ENCODE measurements at regions of chr11 and their contacts with region 1.

Region 1: GRCh38 chr11:130049328-130049771 is 20.3 kb upstream of the APLP2 start:
- DNase-seq: no peak
- ATAC-seq: peak in 1 of 4 donors; percentile 57
- H3K4me3 ChIP-seq: no peak overlapping the region
- H3K27ac ChIP-seq: no peak overlapping the region
- H3K4me1 ChIP-seq: no peaks in the 10 kb centered on the region
- H3K27me3 ChIP-seq: no peaks in the 10 kb centered on the region
- CTCF ChIP-seq: no peak

Region 2: GRCh38 chr11:130006929-130007328 is 42.4 kb before region 1 on chr11:
- intact Hi-C with region 1: loop called in 1 of 3 experiments (anchors 5 kb)
- DNase-seq: no peak
- ATAC-seq: no peak
- H3K4me3 ChIP-seq: no peak overlapping the region
- H3K27ac ChIP-seq: no peak overlapping the region
- H3K4me1 ChIP-seq: no peaks in the 10 kb centered on the region
- H3K27me3 ChIP-seq: no peaks in the 10 kb centered on the region
- CTCF ChIP-seq: no peak

Measured in pancreas (tissue), 10 donors.